Heart left ventricle (tissue), 16 donors: ENCODE measurements at regions of chr9 and their contacts with region 1.

Region 1: DNA sequence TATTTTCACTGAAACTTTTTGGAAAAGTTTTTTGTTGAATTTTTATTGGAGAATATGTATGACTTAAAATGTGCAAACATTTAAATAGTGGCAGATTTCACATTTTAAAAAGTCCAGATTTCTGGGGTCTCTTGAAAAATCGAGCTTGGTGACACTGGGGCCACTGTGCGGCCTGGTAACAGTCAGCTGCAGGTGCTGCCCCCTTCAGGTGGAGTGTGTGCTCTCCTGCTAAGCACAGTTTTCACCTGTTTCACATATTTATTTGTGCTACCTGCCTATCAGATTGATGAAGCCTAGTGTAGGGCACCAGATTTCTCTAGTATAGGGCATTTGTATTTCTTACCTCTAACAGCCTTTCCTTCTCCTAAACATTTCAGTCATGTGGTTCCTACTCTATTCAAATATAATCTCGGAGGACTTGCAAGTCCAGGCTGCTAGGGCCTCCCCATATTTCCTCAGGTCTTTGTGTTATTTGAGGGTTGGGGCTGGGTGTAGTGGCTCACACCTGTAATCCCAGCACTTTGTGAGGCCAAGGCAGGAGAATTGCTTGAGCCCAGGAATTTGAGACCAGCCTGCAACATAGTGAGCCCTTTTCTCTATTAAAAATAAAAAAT is 95.8 kb upstream of the KLF9 start:
- DNase-seq: peak in 2 of 5 donors; percentile 35 to 63
- ATAC-seq: peak in 1 of 4 donors; percentile 52
- H3K4me3 ChIP-seq: no peak overlapping the region
- H3K27ac ChIP-seq: no peak overlapping the region
- H3K4me1 ChIP-seq: peaks cover 0 to 8% (median 0%) of the 10 kb centered on the region in 12 donors
- H3K27me3 ChIP-seq: no peaks in the 10 kb centered on the region
- CTCF ChIP-seq: peak; percentile 25 to 77 (median 52)
- POLR2A ChIP-seq: no peak

Region 2: DNA sequence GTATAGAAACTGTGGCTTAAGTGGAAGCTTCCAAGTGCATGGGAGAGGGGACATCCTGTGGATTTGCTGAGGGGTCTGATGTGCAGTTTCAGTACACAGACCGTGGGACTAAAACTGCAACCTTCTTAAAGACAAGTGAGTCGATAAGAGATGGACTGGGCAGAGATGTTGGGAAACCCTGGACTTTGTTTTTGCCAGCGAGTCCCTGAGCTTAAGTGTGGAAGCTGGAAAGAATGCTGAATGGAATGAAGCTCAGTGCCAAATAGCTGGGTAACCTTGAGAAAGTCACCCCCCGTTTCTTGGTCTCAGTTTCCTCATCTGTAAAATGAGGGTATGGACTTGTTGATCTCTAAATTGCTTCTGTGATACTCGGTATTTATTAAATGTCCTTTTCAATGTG is 58.5 kb before region 1 on chr9:
- intact Hi-C with region 1: loop called in 1 of 10 experiments (anchors 10 kb)
- DNase-seq: no peak
- ATAC-seq: peak in 2 of 4 donors; percentile 24 to 64
- H3K4me3 ChIP-seq: no peak overlapping the region
- H3K27ac ChIP-seq: no peak overlapping the region
- H3K4me1 ChIP-seq: peaks cover 0 to 12% (median 2%) of the 10 kb centered on the region in 12 donors
- H3K27me3 ChIP-seq: no peaks in the 10 kb centered on the region
- CTCF ChIP-seq: no peak
- POLR2A ChIP-seq: no peak

Region 3: DNA sequence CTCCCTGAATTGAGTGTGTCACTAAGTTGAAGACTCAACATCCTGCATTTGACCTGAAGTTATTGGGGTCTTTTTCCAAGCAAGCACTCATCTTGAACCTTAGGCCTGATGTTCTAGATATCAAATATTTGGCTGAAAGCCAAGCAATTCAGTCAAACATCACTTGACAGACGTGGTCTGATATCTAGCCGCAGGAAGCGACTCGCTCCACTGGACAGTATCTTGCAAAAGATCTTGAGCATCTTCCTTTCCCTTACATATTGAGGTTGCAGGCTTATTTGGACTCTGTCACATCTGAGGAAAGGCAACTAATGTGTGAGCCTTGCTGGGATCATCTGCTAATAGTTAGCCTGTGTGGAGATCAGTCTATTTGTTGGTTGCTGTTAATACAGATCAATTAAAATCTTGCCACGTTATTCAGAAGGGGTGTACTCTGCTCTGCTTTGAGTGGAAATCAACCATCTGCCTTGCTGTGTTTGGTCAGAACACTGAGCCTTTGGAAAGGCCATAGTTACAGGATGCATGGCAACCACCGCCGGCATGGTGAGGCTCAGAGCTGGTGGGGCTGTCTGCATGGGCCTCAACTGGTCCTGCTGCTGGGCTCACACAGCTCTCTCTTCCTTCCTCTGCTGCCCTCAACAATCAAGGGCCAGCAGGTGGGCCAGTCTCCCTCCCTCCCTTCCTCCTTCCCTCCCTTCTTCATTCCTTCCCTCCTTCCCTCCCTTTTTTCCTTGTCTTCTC is 71.1 kb after region 1 on chr9:
- intact Hi-C with region 1: loop called in 2 of 10 experiments (anchors 5 to 10 kb)
- DNase-seq: no peak
- ATAC-seq: no peak
- H3K4me3 ChIP-seq: no peak overlapping the region
- H3K27ac ChIP-seq: no peak overlapping the region
- H3K4me1 ChIP-seq: peaks cover 3 to 29% (median 20%) of the 10 kb centered on the region in 12 donors
- H3K27me3 ChIP-seq: no peaks in the 10 kb centered on the region
- CTCF ChIP-seq: no peak
- POLR2A ChIP-seq: no peak